Activated CD4-positive, alpha-beta memory T cell treated with anti-CD3 and anti-CD28 coated beads, Interleukin-2, amount 10 ng/mL, durations not matched to agents 7 days and 5 days (primary cell): ENCODE measurements at regions of chr12 and their contacts with region 1.

Region 1: DNA sequence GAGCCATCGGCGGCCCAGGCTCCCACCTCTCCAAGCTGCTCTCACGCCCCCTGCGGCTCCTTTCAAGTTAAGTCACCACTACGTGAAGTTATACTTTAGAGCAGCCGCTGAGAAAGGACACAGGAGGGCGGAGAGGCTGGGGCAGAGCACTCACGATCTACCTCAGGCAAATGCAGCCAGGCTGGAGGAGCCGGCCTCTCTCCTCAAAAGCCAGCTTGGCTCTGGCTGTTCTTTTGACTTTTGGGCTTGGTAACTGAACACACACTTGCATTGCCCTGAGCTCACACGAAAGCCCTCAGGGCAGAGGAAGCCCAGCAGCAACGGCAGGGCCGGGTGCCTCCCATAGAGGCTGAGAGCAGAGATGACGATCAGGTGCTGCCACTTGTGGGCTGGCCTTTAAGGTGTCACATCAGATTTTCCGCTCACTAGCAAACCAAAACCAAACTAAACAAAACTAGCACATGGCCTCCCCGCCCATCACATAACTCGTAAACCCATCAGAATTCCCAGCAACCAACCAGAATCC is 75.2 kb downstream of the PITPNM2 start:
- DNase-seq: peak; percentile 86
- H3K4me3 Mint-ChIP-seq: peak overlapping the region; percentile 70
- H3K27ac Mint-ChIP-seq: peak overlapping the region; percentile 96
- H3K4me1 Mint-ChIP-seq: peaks cover 34% of the 10 kb centered on the region
- H3K27me3 Mint-ChIP-seq: no peaks in the 10 kb centered on the region

Region 2: DNA sequence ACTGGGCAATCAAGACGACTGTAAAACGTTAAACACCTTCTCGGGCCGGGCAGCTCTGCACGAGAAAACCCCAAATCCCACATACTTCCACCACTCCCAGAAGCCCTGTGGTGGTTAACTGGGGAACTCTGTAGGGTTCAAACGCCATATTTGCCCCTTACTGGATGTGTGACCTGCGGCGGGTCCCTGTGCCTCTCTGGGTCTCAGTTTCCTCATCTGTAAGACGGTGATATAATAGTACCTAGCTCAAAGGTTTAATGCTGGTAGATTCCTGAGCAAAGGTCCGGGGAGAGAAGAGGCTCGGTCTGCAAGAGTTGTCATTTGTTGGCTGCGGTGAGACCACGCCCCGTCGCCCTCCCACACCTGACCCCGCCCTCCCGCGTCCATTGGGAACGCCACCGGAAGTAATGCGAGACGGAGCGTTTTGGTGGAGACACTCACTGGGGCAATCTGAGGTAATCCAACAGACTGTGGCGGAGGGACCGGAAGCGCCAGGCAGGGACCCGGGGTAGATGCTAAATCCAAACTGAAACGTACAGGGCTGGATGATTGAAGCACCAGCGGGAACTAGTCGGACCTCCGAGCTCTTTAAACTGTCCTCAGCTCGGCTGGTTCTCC is 101.3 kb before region 1 on chr12:
- CTCF ChIA-PET with region 1: interaction called, 4 read pairs
- POLR2A ChIA-PET with region 1: interaction called, 15 read pairs
- DNase-seq: peak; percentile 99
- H3K4me3 Mint-ChIP-seq: peak overlapping the region; percentile 97
- H3K27ac Mint-ChIP-seq: peak overlapping the region; percentile 98
- H3K4me1 Mint-ChIP-seq: peaks cover 34% of the 10 kb centered on the region
- H3K27me3 Mint-ChIP-seq: no peaks in the 10 kb centered on the region

Region 3: GRCh38 chr12:123043536-123044001 is 32.1 kb before region 1 on chr12:
- CTCF ChIA-PET with region 1: interaction called, 12 read pairs
- POLR2A ChIA-PET with region 1: interaction called, 20 read pairs
- DNase-seq: peak; percentile 71
- H3K4me3 Mint-ChIP-seq: no peak overlapping the region
- H3K27ac Mint-ChIP-seq: no peak overlapping the region
- H3K4me1 Mint-ChIP-seq: peaks cover 15% of the 10 kb centered on the region
- H3K27me3 Mint-ChIP-seq: no peaks in the 10 kb centered on the region

Region 4: DNA sequence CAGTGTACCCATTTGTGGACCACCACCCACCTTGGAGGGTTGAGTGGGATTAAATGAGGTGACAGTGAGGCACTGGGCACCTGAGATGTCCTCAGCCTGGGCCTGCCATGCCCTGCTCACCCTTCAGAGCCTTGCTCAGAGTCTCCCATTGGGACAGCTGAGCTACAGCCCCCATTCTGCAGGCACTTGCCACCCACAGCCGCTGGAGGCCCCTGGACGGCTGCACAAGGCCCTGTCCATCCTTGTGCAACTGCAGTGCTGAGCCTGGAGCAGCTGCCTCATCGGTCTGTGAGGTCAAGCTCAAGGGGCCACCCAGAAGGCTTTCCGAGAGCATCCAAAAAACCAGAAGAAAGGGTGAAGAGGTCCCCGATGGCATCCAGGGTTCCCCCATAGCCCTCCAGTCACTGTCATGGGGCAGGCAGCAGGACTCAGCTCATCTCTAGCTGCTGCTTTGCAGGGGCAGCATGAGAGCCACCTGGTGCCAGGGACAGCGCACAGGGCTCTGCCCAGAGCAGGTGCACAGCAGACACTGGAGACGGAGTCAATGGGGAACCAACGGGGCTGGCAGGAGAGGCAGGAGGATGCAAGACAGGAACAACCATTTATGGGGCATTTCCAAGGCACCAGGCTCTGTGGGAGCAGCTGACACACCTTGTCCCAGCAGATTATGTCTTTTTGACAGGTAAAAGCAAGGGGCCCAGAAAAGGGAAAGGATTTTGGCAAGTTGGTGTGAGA is 10.7 kb before region 1 on chr12:
- CTCF ChIA-PET with region 1: interaction called, 7 read pairs
- POLR2A ChIA-PET with region 1: interaction called, 13 read pairs
- DNase-seq: no peak
- H3K4me3 Mint-ChIP-seq: no peak overlapping the region
- H3K27ac Mint-ChIP-seq: no peak overlapping the region
- H3K4me1 Mint-ChIP-seq: peaks cover 12% of the 10 kb centered on the region
- H3K27me3 Mint-ChIP-seq: no peaks in the 10 kb centered on the region

Region 5: DNA sequence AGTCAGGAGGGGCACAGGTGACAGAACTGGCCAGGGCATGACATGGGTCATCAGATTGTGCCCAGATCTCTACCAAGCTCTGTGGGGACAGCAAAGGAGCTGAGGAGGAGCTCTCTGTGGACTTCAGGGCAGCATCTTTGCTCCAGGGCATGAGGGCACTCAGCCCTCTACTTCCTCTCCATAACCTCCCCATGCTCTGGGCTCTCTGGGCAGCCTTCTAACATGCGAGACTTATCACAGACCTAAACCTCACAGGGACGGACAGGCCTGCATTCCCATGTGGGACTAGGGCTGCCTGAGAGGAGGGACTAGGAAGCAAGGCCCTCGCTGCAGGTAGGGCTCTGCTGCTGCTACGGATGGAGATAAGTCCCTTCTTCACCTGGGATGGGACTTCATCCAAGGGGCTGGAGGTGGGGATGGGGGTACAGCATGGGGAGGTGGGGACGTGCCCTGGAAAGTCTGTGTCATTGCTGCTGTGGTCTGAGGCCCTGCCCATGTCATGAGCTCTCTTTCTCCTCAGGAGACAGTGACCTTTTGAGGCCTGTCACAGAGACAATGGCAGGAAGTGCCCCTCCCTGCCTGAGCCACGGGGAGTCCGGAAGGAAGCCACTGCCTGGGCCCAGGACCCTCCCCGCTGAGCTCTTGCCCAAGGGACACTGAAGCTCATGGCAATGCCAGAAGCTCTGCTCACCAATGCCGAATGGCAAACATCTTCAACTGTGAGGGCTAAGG is 31.1 kb after region 1 on chr12:
- CTCF ChIA-PET with region 1: interaction called, 17 read pairs
- POLR2A ChIA-PET with region 1: interaction called, 43 read pairs
- DNase-seq: peak; percentile 85
- H3K4me3 Mint-ChIP-seq: peak overlapping the region; percentile 37
- H3K27ac Mint-ChIP-seq: peak overlapping the region; percentile 93
- H3K4me1 Mint-ChIP-seq: peaks cover 39% of the 10 kb centered on the region
- H3K27me3 Mint-ChIP-seq: no peaks in the 10 kb centered on the region

Region 6: DNA sequence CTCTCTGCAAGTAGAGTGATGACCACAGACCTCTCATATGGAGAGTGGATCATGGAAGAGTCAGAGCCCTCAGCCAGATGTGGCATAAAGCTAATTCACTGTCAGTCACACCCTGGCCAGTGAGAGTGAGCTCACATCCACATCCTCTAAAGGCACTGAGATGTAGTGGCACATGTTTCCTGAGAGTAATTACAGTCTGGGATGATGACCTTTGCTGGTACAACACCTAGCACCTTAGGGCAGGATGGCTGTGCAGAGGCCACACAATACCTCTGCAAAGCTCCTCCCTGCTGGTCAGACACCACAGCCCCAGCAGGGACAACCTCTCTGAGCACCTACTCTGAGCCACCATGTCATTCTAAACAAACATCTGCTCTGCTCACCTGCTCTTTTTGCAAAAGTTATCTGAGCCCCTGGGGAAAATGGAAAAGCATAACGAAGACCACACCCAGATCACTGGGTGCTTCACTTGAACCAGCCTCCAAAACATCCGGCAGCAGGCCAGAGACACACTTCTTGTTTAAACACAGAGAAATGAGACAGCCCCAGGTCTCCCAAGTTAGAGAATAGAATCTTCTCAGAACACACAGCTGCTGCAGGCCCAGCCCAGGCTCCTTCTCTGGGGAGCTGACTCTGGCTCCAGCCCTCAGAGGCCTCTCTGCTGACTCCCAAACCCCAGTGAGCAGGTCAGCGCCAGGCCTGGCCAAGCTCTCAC is 44.9 kb after region 1 on chr12:
- CTCF ChIA-PET with region 1: interaction called, 5 read pairs
- POLR2A ChIA-PET with region 1: interaction called, 32 read pairs
- DNase-seq: peak; percentile 38
- H3K4me3 Mint-ChIP-seq: no peak overlapping the region
- H3K27ac Mint-ChIP-seq: peak overlapping the region; percentile 88
- H3K4me1 Mint-ChIP-seq: peaks cover 34% of the 10 kb centered on the region
- H3K27me3 Mint-ChIP-seq: peaks cover 2% of the 10 kb centered on the region

Region 7: GRCh38 chr12:123150744-123151456 is 75.2 kb after region 1 on chr12 and contains the start of gene PITPNM2:
- CTCF ChIA-PET with region 1: interaction called, 8 read pairs
- POLR2A ChIA-PET with region 1: interaction called, 21 read pairs
- DNase-seq: peak; percentile 64
- H3K4me3 Mint-ChIP-seq: peak within 1 kb of the TSS; percentile 74
- H3K27ac Mint-ChIP-seq: peak within 1 kb of the TSS; percentile 54
- H3K4me1 Mint-ChIP-seq: peaks cover 16% of the 10 kb centered on the region
- H3K27me3 Mint-ChIP-seq: peaks cover 22% of the 10 kb centered on the region
- total RNA-seq, gene PITPNM2: 8.1 to 9.3 TPM